ENCODE measurements at regions of chr4 and their contacts with region 1.

Region 1: GRCh38 chr4:184849185-184849584 is 23.4 kb upstream of the ACSL1 start:
- DNase-seq: no peak
- H3K4me3 Mint-ChIP-seq: no peak overlapping the region
- H3K27ac Mint-ChIP-seq: no peak overlapping the region
- H3K4me1 Mint-ChIP-seq: peaks cover under 1% of the 10 kb centered on the region
- H3K27me3 Mint-ChIP-seq: peaks cover 25% of the 10 kb centered on the region

Region 2: GRCh38 chr4:184733654-184734524 is 115.3 kb before region 1 on chr4 and contains the start of gene CENPU:
- CTCF ChIA-PET with region 1: no interaction called
- DNase-seq: peak; percentile 97
- H3K4me3 Mint-ChIP-seq: peak within 1 kb of the TSS; percentile 96
- H3K27ac Mint-ChIP-seq: peak within 1 kb of the TSS; percentile 96
- H3K4me1 Mint-ChIP-seq: peaks cover 50% of the 10 kb centered on the region
- H3K27me3 Mint-ChIP-seq: no peaks in the 10 kb centered on the region

Region 3: DNA sequence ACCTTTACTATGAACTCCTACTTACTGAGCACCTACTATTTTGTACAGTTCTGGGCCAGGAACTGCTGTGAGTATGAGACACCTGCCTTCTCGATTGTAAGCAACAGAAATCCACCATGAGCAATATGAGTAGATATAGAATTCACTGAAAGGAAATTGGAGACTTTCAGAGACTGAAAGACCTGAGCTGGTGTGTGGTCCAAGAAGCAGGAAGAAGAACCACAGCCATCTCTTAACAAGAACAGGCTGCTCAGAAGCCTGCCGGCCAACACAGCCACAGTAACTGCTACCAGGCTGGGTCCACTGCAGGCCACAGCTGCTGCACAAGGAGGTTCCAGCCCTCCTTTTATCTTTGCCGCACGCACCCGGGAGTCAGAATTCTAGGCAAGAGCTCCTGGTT is 12.6 kb before region 1 on chr4:
- CTCF ChIA-PET with region 1: interaction called, 11 read pairs
- DNase-seq: no peak
- H3K4me3 Mint-ChIP-seq: no peak overlapping the region
- H3K27ac Mint-ChIP-seq: no peak overlapping the region
- H3K4me1 Mint-ChIP-seq: no peaks in the 10 kb centered on the region
- H3K27me3 Mint-ChIP-seq: peaks cover 18% of the 10 kb centered on the region

Measured in activated naive CD4-positive, alpha-beta T cell treated with anti-CD3 and anti-CD28 coated beads, Interleukin-2, amount 10 ng/mL, durations not matched to agents 7 days and 5 days (primary cell).